ENCODE measurements at regions of chr11 and their contacts with region 1.

Region 1: DNA sequence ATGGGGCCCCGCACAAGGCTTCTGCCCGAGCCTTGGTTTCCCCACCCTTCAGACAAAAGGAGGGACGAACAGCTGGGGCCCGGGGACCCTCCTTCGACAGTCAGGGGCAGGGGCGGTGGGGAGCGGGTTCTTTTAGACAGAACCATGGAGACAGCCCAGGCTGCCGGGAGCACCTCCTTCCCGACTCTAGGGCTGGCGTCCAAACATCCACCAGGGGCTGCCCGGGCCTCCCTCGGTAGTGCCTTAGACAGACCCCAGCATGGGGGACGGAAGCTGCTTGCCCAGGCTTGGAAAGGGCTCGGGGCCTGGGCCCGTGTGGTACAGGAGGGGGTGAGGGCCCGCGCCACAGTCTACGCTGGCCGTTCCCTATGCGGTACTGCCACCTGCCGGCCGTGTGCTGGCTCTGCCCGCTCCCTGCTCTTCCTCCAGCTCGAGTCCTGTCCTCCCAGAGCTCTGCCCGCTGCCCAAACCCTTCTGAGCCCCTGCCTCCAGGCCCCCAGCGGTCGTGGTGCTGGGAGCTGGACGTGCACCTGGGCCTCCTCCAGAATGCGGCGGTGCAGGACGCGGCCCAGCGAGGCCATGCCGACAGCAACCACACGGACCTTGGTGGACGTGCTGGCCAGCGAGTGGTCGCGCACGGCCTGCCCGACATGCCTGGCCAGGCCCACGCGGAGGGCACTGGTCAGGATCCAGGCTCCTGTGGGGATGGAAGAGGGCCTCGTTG is 20.1 kb downstream of the TSSC4 start:
- DNase-seq: peak; percentile 51 to 89 (median 68)
- ATAC-seq: peak; percentile 96
- H3K4me3 ChIP-seq: no peak overlapping the region
- H3K4me3 Mint-ChIP-seq: no peak overlapping the region
- H3K27ac ChIP-seq: no peak overlapping the region
- H3K27ac Mint-ChIP-seq: no peak overlapping the region
- H3K4me1 ChIP-seq: peaks cover 14% of the 10 kb centered on the region
- H3K4me1 Mint-ChIP-seq: no peaks in the 10 kb centered on the region
- H3K27me3 ChIP-seq: no peaks in the 10 kb centered on the region
- H3K27me3 Mint-ChIP-seq: no peaks in the 10 kb centered on the region
- CTCF ChIP-seq: peak; percentile 88

Region 2: DNA sequence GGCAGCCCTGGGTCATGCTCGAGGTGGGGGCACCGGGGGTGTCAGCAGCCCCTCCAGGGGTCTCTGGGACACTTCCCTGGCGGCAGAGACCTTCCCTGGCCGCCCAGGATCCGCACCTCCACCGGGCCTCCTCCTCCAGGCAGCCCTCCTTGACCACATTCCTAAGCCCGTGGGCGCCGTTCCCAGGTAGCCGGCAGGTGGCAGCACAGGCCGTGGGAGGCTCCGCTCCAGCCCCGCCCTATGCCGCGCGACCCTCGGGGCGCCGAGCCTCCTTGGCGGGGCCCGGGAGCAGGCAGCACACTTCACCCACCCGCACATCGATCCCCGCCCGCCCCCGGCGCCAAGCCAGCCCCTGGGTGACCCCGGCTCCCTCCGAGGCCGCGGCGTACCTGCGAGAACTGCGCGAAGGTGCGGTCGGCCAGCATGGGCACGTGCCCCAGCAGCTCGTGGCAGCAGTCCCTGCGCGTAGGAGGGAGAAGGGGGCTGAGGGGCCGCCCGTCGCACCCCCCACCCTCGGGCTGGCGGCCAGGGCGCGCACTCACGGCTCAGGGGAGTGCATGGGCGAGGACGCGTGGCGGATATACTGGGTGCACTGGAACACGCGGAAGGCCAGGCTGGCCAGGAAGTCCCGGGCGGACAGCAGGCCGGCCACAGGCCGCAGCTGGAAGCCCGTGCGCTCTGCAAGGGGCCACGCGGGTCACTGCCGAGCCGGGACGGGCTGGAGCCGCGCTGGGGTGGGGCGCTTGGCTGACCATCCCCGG is 254.4 kb before region 1 on chr11:
- CTCF ChIA-PET with region 1: interaction called, 3 read pairs
- POLR2A ChIA-PET with region 1: no interaction called
- intact Hi-C with region 1: loop called in 1 of 2 experiments (anchors 1 kb)
- DNase-seq: peak in 11 of 14 experiments; percentile 12 to 65 (median 32)
- ATAC-seq: peak; percentile 48
- H3K4me3 ChIP-seq: no peak overlapping the region
- H3K4me3 Mint-ChIP-seq: no peak overlapping the region
- H3K27ac ChIP-seq: no peak overlapping the region
- H3K27ac Mint-ChIP-seq: no peak overlapping the region
- H3K4me1 ChIP-seq: peaks cover 5% of the 10 kb centered on the region
- H3K4me1 Mint-ChIP-seq: no peaks in the 10 kb centered on the region
- H3K27me3 ChIP-seq: peaks cover 0 to 12% of the 10 kb centered on the region in 2 experiments
- H3K27me3 Mint-ChIP-seq: peaks cover 12% of the 10 kb centered on the region
- CTCF ChIP-seq: peak; percentile 47

Region 3: GRCh38 chr11:2186669-2187279 is 233.9 kb before region 1 on chr11:
- CTCF ChIA-PET with region 1: interaction called, 12 read pairs
- POLR2A ChIA-PET with region 1: interaction called, 3 read pairs
- intact Hi-C with region 1: loop called (anchors 1 kb)
- DNase-seq: peak; percentile 11 to 73 (median 37)
- ATAC-seq: peak; percentile 96
- H3K4me3 ChIP-seq: no peak overlapping the region
- H3K4me3 Mint-ChIP-seq: no peak overlapping the region
- H3K27ac ChIP-seq: no peak overlapping the region
- H3K27ac Mint-ChIP-seq: no peak overlapping the region
- H3K4me1 ChIP-seq: peaks cover 10% of the 10 kb centered on the region
- H3K4me1 Mint-ChIP-seq: no peaks in the 10 kb centered on the region
- H3K27me3 ChIP-seq: peaks cover 3 to 5% of the 10 kb centered on the region in 2 experiments
- H3K27me3 Mint-ChIP-seq: peaks cover 21% of the 10 kb centered on the region
- CTCF ChIP-seq: peak; percentile 52

Region 4: GRCh38 chr11:2196970-2197770 is 223.5 kb before region 1 on chr11:
- CTCF ChIA-PET with region 1: interaction called, 5 read pairs
- POLR2A ChIA-PET with region 1: interaction called, 3 read pairs
- intact Hi-C with region 1: loop called (anchors 1 kb)
- DNase-seq: peak; percentile 53 to 84 (median 62)
- ATAC-seq: peak; percentile 90
- H3K4me3 ChIP-seq: no peak overlapping the region
- H3K4me3 Mint-ChIP-seq: no peak overlapping the region
- H3K27ac ChIP-seq: no peak overlapping the region
- H3K27ac Mint-ChIP-seq: no peak overlapping the region
- H3K4me1 ChIP-seq: peaks cover 14% of the 10 kb centered on the region
- H3K4me1 Mint-ChIP-seq: peaks cover 13% of the 10 kb centered on the region
- H3K27me3 ChIP-seq: no peaks in the 10 kb centered on the region
- H3K27me3 Mint-ChIP-seq: no peaks in the 10 kb centered on the region
- CTCF ChIP-seq: peak; percentile 63

Region 5: GRCh38 chr11:2305140-2305840 is 115.4 kb before region 1 on chr11:
- CTCF ChIA-PET with region 1: interaction called, 89 read pairs
- POLR2A ChIA-PET with region 1: no interaction called
- intact Hi-C with region 1: loop called (anchors 1 kb)
- DNase-seq: peak; percentile 61 to 93 (median 82)
- ATAC-seq: peak; percentile 23
- H3K4me3 ChIP-seq: peak overlapping the region; percentile 47
- H3K4me3 Mint-ChIP-seq: peak overlapping the region; percentile 80
- H3K27ac ChIP-seq: peak overlapping the region; percentile 40 to 72
- H3K27ac Mint-ChIP-seq: peak overlapping the region; percentile 94
- H3K4me1 ChIP-seq: peaks cover 71% of the 10 kb centered on the region
- H3K4me1 Mint-ChIP-seq: peaks cover 60% of the 10 kb centered on the region
- H3K27me3 ChIP-seq: no peaks in the 10 kb centered on the region
- H3K27me3 Mint-ChIP-seq: no peaks in the 10 kb centered on the region
- CTCF ChIP-seq: peak; percentile 50